Sigmoid colon (tissue), 7 donors: ENCODE measurements at regions of chr6 and their contacts with region 1.

Region 1: DNA sequence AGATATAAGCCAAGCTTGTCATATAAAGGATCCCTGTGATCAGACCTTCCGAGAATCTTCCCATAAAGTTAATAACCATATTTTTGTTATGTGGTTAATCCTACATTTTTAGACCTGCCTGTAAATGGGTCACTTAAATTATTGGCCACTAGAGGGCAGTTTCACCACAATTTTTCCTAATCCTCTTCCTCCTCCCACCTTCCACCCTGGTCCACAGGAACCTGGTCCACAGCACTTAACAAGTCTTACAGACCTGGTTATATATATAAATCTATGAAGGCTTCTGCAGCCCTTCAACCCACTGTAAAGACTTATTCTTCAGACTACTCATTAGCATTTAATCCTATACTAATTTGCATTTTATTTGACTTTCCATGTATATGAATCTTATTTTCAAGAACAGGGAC is 28.3 kb downstream of the MRS2 start:
- DNase-seq: no peak
- H3K4me3 ChIP-seq: no peak overlapping the region
- H3K27ac ChIP-seq: no peak overlapping the region
- H3K4me1 ChIP-seq: peaks cover 0 to 5% (median 0%) of the 10 kb centered on the region in 4 donors
- H3K27me3 ChIP-seq: no peaks in the 10 kb centered on the region
- CTCF ChIP-seq: peak in 3 of 4 experiments; percentile 43 to 67 (median 61)
- EP300 ChIP-seq: no peak
- POLR2A ChIP-seq: no peak

Region 2: GRCh38 chr6:24504602-24505586 is 73.8 kb after region 1 on chr6:
- intact Hi-C with region 1: no loop called
- DNase-seq: no peak
- H3K4me3 ChIP-seq: no peak overlapping the region
- H3K27ac ChIP-seq: no peak overlapping the region
- H3K4me1 ChIP-seq: no peaks in the 10 kb centered on the region
- H3K27me3 ChIP-seq: no peaks in the 10 kb centered on the region
- CTCF ChIP-seq: no peak
- EP300 ChIP-seq: no peak
- POLR2A ChIP-seq: no peak

Region 3: DNA sequence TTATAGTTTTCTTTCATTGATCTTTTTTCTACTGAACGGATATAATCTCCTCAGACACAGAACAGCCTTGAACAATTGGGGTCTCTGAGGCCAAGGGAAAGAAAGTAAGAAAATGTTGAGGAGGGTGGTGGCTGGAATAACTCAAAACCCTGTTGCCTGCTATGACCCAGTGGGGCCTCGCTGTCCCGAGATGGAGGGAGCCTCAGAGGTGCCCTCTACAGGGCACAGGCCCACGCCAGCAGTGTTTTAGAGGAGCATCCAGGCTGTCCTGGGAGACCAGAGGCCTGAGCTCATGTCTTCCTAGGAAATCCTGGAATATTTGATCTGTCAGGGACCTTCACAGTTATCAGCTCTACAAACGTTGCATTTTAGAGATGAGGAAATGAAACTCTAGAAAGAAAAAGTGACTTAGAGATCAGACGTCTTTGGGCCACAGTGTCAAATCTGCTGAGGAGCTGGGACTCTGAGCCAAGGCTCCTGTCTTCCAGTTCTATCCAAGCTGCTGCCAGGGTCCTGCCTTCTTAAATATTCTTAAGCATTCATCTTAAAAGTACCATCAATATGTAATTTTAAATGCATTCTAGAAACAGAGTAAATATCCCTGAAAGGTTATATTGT is 90.0 kb after region 1 on chr6:
- intact Hi-C with region 1: loop called (anchors 5 kb)
- DNase-seq: no peak
- H3K4me3 ChIP-seq: no peak overlapping the region
- H3K27ac ChIP-seq: no peak overlapping the region
- H3K4me1 ChIP-seq: no peaks in the 10 kb centered on the region
- H3K27me3 ChIP-seq: no peaks in the 10 kb centered on the region
- CTCF ChIP-seq: peak in 1 of 4 experiments; percentile 46
- EP300 ChIP-seq: no peak
- POLR2A ChIP-seq: no peak